ENCODE measurements at regions of chr19 and their contacts with region 1.

Region 1: GRCh38 chr19:55418185-55418584 is 10.6 kb upstream of the UBE2S start:
- DNase-seq: peak; percentile 69
- H3K4me3 ChIP-seq: no peak overlapping the region
- H3K27ac ChIP-seq: no peak overlapping the region
- H3K4me1 ChIP-seq: no peaks in the 10 kb centered on the region
- H3K27me3 ChIP-seq: peaks cover 3% of the 10 kb centered on the region
- CTCF ChIP-seq: peak; percentile 75 to 77

Region 2: DNA sequence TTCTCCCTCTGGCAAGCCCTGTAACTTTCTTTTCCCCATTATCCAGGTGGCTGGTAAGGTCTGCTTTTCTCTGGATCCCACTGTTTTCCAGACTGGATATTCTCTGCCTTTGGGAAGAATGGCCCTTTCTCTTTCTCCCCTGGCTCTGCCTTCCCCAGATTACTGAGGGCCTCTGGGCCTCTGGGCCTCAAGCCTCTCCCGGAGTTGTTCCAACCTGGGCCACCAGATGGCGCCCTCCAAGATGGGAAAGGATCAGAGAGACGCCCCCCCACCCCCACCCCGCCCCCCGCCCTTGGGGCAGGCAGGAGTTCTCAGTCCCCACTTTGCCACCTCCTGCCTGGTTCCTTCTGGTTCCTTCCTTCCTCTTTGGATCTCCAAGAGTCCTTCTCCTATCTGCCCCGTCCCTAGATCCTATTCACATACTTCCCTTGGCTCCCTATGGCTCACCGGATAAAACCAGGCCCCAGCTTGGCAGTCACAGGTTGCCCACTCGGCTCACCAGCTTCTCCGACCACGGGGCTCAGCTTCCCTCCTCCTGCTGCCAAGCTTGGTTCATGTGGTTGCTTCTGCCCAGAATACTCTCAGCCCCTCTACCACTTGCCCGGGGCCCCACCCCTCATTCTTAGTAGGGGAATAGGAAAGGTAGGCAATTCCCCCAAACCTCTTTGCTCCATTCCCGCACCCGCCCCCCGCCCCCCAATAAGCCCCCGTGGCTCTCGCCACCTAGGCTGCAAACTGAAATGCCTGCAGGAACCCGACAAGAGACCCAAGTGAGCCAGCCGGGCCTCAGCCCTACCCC is 329.4 kb before region 1 on chr19:
- CTCF ChIA-PET with region 1: no interaction called
- dilution Hi-C with region 1: no loop called
- in situ Hi-C with region 1: no loop called
- intact Hi-C with region 1: loop called (anchors 1 kb)
- DNase-seq: peak; percentile 28
- H3K4me3 ChIP-seq: no peak overlapping the region
- H3K27ac ChIP-seq: no peak overlapping the region
- H3K4me1 ChIP-seq: no peaks in the 10 kb centered on the region
- H3K27me3 ChIP-seq: no peaks in the 10 kb centered on the region
- CTCF ChIP-seq: peak; percentile 45 to 65

Region 3: GRCh38 chr19:55216461-55217198 is 201.6 kb before region 1 on chr19:
- CTCF ChIA-PET with region 1: no interaction called
- dilution Hi-C with region 1: no loop called
- in situ Hi-C with region 1: no loop called
- intact Hi-C with region 1: no loop called
- DNase-seq: peak; percentile 99
- H3K4me3 ChIP-seq: peak overlapping the region; percentile 37 to 64 (median 49)
- H3K27ac ChIP-seq: peak overlapping the region; percentile 70
- H3K4me1 ChIP-seq: peaks cover 9% of the 10 kb centered on the region
- H3K27me3 ChIP-seq: no peaks in the 10 kb centered on the region
- CTCF ChIP-seq: no peak

Region 4: DNA sequence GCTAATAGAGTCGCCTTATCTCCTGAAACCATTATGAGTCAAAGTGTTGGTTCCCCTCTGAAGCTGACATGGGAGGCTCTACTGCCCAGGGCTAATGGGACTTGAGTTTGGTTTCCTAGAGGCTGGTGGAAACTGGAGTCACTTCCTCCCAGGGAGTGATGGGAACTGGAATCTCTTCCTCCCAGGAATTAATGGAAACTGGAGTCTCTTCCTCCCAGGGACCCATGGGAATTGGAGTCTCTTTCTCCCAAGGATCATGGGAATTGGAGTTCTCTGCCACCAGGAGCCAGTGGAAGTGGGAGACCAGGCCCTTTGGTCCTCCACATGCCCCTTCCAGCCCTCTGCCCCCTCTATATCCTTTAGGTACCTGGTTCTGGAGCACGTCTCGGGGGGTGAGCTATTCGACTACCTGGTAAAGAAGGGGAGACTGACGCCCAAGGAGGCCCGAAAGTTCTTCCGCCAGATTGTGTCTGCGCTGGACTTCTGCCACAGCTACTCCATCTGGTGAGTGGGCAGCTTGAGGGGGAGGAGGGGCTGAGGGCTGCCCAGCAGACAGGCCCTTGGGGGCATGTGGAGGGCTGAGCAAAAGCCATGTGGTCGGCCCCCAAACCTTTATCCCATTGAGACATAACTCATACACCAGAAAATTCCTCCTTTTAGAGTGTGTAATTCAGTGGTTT is 128.9 kb before region 1 on chr19:
- CTCF ChIA-PET with region 1: no interaction called
- dilution Hi-C with region 1: loop called (anchors 10 kb)
- in situ Hi-C with region 1: no loop called
- intact Hi-C with region 1: loop called (anchors 1 kb)
- DNase-seq: no peak
- H3K4me3 ChIP-seq: no peak overlapping the region
- H3K27ac ChIP-seq: no peak overlapping the region
- H3K4me1 ChIP-seq: no peaks in the 10 kb centered on the region
- H3K27me3 ChIP-seq: no peaks in the 10 kb centered on the region
- CTCF ChIP-seq: no peak

Region 5: DNA sequence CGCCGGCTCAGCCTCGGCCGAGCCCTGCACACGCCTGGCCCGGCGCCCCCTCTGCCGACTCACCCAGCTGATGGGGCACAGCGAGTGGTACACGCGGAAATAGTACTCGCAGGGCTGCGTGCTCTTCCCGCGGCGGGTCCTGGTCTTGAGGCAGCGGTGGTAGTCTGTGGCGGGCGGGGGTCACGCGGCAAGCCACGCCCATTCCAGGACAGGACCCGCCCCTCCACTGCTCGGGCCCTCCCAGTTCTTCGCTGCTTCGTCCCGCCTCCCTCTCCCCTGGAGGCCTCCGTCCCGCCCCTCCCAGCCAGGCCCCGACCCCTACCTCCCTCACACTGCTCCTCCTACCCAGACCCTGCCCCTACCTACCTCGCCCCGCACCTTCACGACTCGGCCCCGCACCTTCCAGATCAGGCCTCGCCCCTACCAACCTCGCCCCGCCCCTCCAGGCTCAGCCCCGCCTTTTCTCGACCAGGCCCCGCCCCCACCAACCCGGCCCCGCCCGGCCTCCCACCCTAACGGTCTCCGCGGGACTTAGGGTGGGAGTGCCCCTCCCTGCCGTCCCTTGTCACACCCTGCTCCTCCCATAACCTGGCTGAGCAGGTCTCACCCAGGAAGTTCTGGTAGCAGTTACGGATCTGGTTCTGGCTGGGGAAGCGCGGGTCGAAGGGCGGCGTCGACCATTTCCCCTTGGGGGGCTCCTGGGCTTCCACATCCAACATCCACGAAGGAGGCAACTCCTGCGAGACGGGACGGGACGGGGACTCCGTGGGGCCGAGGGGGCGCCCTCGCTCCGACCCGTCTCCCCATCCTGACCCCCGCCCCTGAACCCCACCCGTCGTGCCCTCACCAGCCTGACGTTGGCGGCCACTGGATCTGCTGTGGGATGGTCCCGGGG is 64.1 kb before region 1 on chr19:
- CTCF ChIA-PET with region 1: no interaction called
- dilution Hi-C with region 1: no loop called
- in situ Hi-C with region 1: no loop called
- intact Hi-C with region 1: no loop called
- DNase-seq: peak; percentile 60
- H3K4me3 ChIP-seq: peak overlapping the region; percentile 47 to 59 (median 48)
- H3K27ac ChIP-seq: no peak overlapping the region
- H3K4me1 ChIP-seq: peaks cover 30% of the 10 kb centered on the region
- H3K27me3 ChIP-seq: no peaks in the 10 kb centered on the region
- CTCF ChIP-seq: no peak

Region 6: DNA sequence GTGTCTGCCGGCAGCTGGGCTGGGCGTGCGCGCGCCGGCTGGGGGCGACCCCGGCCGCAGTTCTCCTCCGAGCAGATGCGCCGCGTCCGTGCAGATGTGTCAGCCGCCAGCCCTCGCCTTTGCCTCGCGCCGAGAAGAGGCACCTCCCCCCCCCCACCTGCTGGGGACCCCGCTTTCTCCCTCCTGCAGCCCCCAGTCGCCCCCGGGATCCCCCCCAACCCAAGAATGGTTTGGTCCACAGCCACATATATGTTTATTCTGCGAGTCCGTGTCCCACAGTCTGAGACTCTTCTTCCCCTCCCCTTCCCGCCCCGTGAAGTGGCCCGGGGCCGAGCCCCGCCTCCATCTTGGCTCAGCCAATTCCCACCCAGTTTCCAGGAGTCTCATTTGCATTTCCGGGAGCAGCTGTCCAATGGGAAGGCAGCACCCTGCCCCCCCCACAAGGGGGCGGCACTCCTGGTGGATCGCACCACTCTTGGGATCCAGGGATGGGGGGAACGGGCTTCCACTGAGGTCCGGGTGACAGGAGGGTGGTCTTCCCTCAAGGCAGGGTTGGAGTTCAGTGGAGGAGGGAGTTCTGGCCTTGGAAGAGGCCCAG is 34.7 kb after region 1 on chr19:
- CTCF ChIA-PET with region 1: no interaction called
- dilution Hi-C with region 1: no loop called
- in situ Hi-C with region 1: no loop called
- intact Hi-C with region 1: loop called (anchors 1 kb)
- DNase-seq: peak; percentile 40
- H3K4me3 ChIP-seq: no peak overlapping the region
- H3K27ac ChIP-seq: no peak overlapping the region
- H3K4me1 ChIP-seq: peaks cover 12% of the 10 kb centered on the region
- H3K27me3 ChIP-seq: peaks cover 12% of the 10 kb centered on the region
- CTCF ChIP-seq: no peak

Measured in mammary epithelial cell (primary cell).